Naive thymus-derived CD4-positive, alpha-beta T cell (primary cell): ENCODE measurements at regions of chr7 and their contacts with region 1.

Region 1: GRCh38 chr7:148575640-148576411 is 14.7 kb upstream of the C7orf33 start:
- DNase-seq: peak; percentile 38 to 69 (median 56)
- ATAC-seq: peak; percentile 90
- H3K4me3 ChIP-seq: no peak overlapping the region
- H3K4me3 Mint-ChIP-seq: peak overlapping the region in 1 of 10 donors; percentile 43
- H3K27ac ChIP-seq: no peak overlapping the region
- H3K27ac Mint-ChIP-seq: no peak overlapping the region
- H3K4me1 ChIP-seq: peaks cover 0 to 4% of the 10 kb centered on the region in 2 donors
- H3K4me1 Mint-ChIP-seq: peaks cover 0 to 10% (median 4%) of the 10 kb centered on the region in 7 donors
- H3K27me3 ChIP-seq: no peaks in the 10 kb centered on the region
- H3K27me3 Mint-ChIP-seq: peaks cover 0 to 17% (median 0%) of the 10 kb centered on the region in 5 donors

Region 2: GRCh38 chr7:148503875-148504487 is 71.8 kb before region 1 on chr7:
- CTCF ChIA-PET with region 1: no interaction called
- POLR2A ChIA-PET with region 1: no interaction called
- intact Hi-C with region 1: loop called (anchors 1 to 5 kb)
- DNase-seq: peak in 7 of 9 donors; percentile 18 to 52 (median 40)
- ATAC-seq: no peak
- H3K4me3 ChIP-seq: no peak overlapping the region
- H3K4me3 Mint-ChIP-seq: no peak overlapping the region
- H3K27ac ChIP-seq: no peak overlapping the region
- H3K27ac Mint-ChIP-seq: no peak overlapping the region
- H3K4me1 ChIP-seq: no peaks in the 10 kb centered on the region
- H3K4me1 Mint-ChIP-seq: peaks cover 0 to 7% (median 0%) of the 10 kb centered on the region in 7 donors
- H3K27me3 ChIP-seq: no peaks in the 10 kb centered on the region
- H3K27me3 Mint-ChIP-seq: peaks cover 0 to 27% (median 16%) of the 10 kb centered on the region in 5 donors

Region 3: GRCh38 chr7:148556924-148557323 is 18.9 kb before region 1 on chr7:
- CTCF ChIA-PET with region 1: interaction called, 11 read pairs
- POLR2A ChIA-PET with region 1: no interaction called
- intact Hi-C with region 1: no loop called
- DNase-seq: no peak
- ATAC-seq: no peak
- H3K4me3 ChIP-seq: no peak overlapping the region
- H3K4me3 Mint-ChIP-seq: no peak overlapping the region
- H3K27ac ChIP-seq: no peak overlapping the region
- H3K27ac Mint-ChIP-seq: no peak overlapping the region
- H3K4me1 ChIP-seq: no peaks in the 10 kb centered on the region
- H3K4me1 Mint-ChIP-seq: peaks cover 0 to 20% (median 5%) of the 10 kb centered on the region in 7 donors
- H3K27me3 ChIP-seq: no peaks in the 10 kb centered on the region
- H3K27me3 Mint-ChIP-seq: peaks cover 0 to 32% (median 26%) of the 10 kb centered on the region in 5 donors

Region 4: GRCh38 chr7:148563583-148564274 is 12.1 kb before region 1 on chr7:
- CTCF ChIA-PET with region 1: interaction called, 10 read pairs
- POLR2A ChIA-PET with region 1: no interaction called
- intact Hi-C with region 1: no loop called
- DNase-seq: no peak
- ATAC-seq: no peak
- H3K4me3 ChIP-seq: peak overlapping the region; percentile 16
- H3K4me3 Mint-ChIP-seq: peak overlapping the region in 5 of 10 donors; percentile 15 to 70 (median 61)
- H3K27ac ChIP-seq: no peak overlapping the region
- H3K27ac Mint-ChIP-seq: peak overlapping the region in 4 of 9 donors; percentile 44 to 86 (median 70)
- H3K4me1 ChIP-seq: peaks cover 6 to 9% of the 10 kb centered on the region in 2 donors
- H3K4me1 Mint-ChIP-seq: peaks cover 0 to 25% (median 15%) of the 10 kb centered on the region in 7 donors
- H3K27me3 ChIP-seq: no peaks in the 10 kb centered on the region
- H3K27me3 Mint-ChIP-seq: peaks cover 0 to 20% (median 18%) of the 10 kb centered on the region in 5 donors

Region 5: DNA sequence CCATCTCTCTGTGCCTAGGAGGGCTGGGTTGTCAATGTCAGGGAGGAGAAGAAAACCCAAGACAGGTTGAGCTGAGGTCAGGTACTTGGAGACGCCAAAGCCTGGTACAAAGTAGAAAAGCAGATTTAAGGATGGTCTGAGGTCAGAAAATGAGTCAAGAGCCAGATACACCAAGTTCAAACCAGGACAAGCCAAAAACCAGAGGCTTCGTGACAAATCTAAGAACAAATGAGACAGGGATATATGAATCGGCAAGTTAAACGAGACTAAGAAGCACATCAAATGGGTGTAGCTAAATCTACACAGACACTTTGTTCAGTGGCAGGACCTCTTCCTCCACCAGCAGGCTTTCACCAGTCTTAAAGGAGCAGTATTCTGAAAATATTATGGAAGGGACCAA is 48.9 kb after region 1 on chr7:
- CTCF ChIA-PET with region 1: interaction called, 4 read pairs
- POLR2A ChIA-PET with region 1: no interaction called
- intact Hi-C with region 1: loop called in 1 of 2 experiments (anchors 2 kb)
- DNase-seq: no peak
- ATAC-seq: no peak
- H3K4me3 ChIP-seq: no peak overlapping the region
- H3K4me3 Mint-ChIP-seq: peak overlapping the region in 6 of 10 donors; percentile 27 to 73 (median 62)
- H3K27ac ChIP-seq: no peak overlapping the region
- H3K27ac Mint-ChIP-seq: peak overlapping the region in 1 of 9 donors; percentile 5
- H3K4me1 ChIP-seq: peaks cover 16 to 30% of the 10 kb centered on the region in 2 donors
- H3K4me1 Mint-ChIP-seq: peaks cover 35 to 70% (median 60%) of the 10 kb centered on the region in 7 donors
- H3K27me3 ChIP-seq: no peaks in the 10 kb centered on the region
- H3K27me3 Mint-ChIP-seq: peaks cover 0 to 20% (median 6%) of the 10 kb centered on the region in 5 donors

Region 6: GRCh38 chr7:148773334-148773733 is 197.5 kb after region 1 on chr7:
- CTCF ChIA-PET with region 1: no interaction called
- POLR2A ChIA-PET with region 1: no interaction called
- intact Hi-C with region 1: loop called (anchors 5 to 10 kb)
- DNase-seq: peak in 8 of 9 donors; percentile 12 to 51 (median 38)
- ATAC-seq: peak; percentile 95
- H3K4me3 ChIP-seq: no peak overlapping the region
- H3K4me3 Mint-ChIP-seq: peak overlapping the region; percentile 34 to 82 (median 67)
- H3K27ac ChIP-seq: peak overlapping the region; percentile 46
- H3K27ac Mint-ChIP-seq: peak overlapping the region; percentile 53 to 93 (median 86)
- H3K4me1 ChIP-seq: peaks cover 18 to 19% of the 10 kb centered on the region in 2 donors
- H3K4me1 Mint-ChIP-seq: peaks cover 27 to 48% (median 36%) of the 10 kb centered on the region in 7 donors
- H3K27me3 ChIP-seq: no peaks in the 10 kb centered on the region
- H3K27me3 Mint-ChIP-seq: no peaks in the 10 kb centered on the region

Region 7: DNA sequence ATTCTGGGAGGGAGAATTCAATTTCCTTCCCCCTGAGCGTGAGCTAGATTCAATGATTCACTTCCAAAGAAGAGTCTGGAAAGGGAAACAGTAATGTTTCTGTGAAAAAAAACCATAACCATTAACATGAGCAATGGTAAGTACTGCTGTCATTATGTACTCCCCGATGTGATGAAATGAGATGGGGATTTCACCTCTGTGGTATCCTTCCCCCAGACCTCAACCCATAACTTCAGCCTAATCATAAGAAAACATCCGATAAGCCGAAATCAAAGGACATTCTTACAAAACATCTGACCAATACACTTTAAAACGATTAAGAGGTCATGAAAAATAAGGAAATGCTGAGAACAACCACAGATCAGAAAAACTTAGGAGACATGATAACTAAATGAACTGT is 281.1 kb after region 1 on chr7:
- CTCF ChIA-PET with region 1: no interaction called
- POLR2A ChIA-PET with region 1: no interaction called
- intact Hi-C with region 1: loop called in 1 of 2 experiments (anchors 1 kb)
- DNase-seq: no peak
- ATAC-seq: peak; percentile 57
- H3K4me3 ChIP-seq: no peak overlapping the region
- H3K4me3 Mint-ChIP-seq: peak overlapping the region in 1 of 10 donors; percentile 60
- H3K27ac ChIP-seq: no peak overlapping the region
- H3K27ac Mint-ChIP-seq: peak overlapping the region in 1 of 9 donors; percentile 63
- H3K4me1 ChIP-seq: peaks cover 3 to 5% of the 10 kb centered on the region in 2 donors
- H3K4me1 Mint-ChIP-seq: peaks cover 8 to 45% (median 15%) of the 10 kb centered on the region in 7 donors
- H3K27me3 ChIP-seq: no peaks in the 10 kb centered on the region
- H3K27me3 Mint-ChIP-seq: no peaks in the 10 kb centered on the region

Region 8: DNA sequence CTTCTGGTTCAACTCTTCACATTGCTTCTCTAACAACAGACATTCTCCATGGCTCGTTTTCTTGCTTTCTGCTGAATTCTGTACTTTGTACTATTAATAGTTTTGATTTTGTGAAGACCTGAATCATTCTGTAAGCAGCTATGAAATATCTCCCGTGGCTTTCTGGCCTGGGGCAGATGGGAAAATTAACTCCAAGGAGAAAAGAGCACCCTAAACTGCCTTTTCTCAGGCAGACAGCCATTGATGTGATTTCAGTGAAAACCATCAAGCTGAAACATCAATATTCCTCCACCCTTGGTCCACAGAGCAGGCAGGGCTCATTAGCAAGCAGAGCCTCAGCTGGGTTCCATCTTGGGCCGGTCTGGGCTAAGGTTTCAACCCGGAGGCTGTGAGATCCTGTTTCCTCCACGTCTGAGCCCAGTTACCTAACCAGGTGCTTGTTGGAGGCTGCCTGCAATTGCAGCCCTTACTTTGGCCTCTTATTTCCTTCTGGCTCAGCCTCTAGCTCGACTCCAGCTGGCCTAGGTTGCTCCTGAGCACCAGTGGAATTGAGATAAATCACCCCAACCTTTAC is 329.4 kb after region 1 on chr7:
- CTCF ChIA-PET with region 1: no interaction called
- POLR2A ChIA-PET with region 1: no interaction called
- intact Hi-C with region 1: no loop called
- DNase-seq: no peak
- ATAC-seq: no peak
- H3K4me3 ChIP-seq: no peak overlapping the region
- H3K4me3 Mint-ChIP-seq: no peak overlapping the region
- H3K27ac ChIP-seq: no peak overlapping the region
- H3K27ac Mint-ChIP-seq: no peak overlapping the region
- H3K4me1 ChIP-seq: no peaks in the 10 kb centered on the region
- H3K4me1 Mint-ChIP-seq: peaks cover 3 to 14% (median 9%) of the 10 kb centered on the region in 7 donors
- H3K27me3 ChIP-seq: no peaks in the 10 kb centered on the region
- H3K27me3 Mint-ChIP-seq: peaks cover 0 to 3% (median 0%) of the 10 kb centered on the region in 5 donors